Posterior cingulate gyrus (tissue), 11 donors: ENCODE measurements at regions of chr14 and their contacts with region 1.

Region 1: GRCh38 chr14:74478996-74479635 is 14.0 kb downstream of the NPC2 start:
- DNase-seq: no peak

Region 2: GRCh38 chr14:74362361-74362915 is 116.7 kb before region 1 on chr14:
- intact Hi-C with region 1: loop called (anchors 1 kb)
- DNase-seq: peak; percentile 48 to 96 (median 80)

Region 3: DNA sequence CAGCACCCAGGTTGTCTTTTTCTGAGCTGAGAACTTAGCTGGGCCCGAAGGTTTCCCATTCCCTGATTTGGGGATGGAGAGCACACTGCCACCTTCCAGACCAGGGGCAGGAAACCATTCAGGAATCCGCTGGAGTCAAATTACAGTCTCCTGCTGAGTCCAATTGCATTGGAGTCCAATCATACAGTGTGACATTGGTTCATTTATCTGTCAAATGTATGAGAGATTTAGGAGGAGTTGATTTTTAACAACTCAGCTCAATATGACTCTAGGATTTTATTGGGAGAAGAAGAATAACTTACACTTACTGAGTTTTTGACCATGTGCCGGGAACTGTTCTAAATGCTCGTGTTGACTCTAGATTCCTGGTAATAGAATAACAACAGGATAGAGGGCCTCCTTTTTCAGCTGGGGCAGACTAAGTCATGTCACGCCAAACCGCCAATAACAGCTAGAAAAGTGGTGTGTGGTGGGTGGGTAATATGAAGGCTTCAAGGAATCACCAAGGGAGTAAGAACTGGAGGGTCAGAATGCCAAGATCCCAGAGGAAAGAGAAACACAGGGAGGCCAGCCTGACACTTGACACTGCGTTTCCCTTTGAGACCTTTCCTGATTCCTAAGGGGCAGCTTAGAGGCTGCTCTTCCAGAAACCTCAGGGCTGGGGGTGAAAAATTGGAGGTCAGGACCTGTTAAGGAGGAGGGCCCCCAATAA is 64.6 kb before region 1 on chr14:
- intact Hi-C with region 1: no loop called
- DNase-seq: peak in 1 of 10 donors; percentile 32

Region 4: GRCh38 chr14:74549588-74549987 is 70.5 kb after region 1 on chr14:
- intact Hi-C with region 1: no loop called
- DNase-seq: peak in 1 of 10 donors; percentile 16

Region 5: DNA sequence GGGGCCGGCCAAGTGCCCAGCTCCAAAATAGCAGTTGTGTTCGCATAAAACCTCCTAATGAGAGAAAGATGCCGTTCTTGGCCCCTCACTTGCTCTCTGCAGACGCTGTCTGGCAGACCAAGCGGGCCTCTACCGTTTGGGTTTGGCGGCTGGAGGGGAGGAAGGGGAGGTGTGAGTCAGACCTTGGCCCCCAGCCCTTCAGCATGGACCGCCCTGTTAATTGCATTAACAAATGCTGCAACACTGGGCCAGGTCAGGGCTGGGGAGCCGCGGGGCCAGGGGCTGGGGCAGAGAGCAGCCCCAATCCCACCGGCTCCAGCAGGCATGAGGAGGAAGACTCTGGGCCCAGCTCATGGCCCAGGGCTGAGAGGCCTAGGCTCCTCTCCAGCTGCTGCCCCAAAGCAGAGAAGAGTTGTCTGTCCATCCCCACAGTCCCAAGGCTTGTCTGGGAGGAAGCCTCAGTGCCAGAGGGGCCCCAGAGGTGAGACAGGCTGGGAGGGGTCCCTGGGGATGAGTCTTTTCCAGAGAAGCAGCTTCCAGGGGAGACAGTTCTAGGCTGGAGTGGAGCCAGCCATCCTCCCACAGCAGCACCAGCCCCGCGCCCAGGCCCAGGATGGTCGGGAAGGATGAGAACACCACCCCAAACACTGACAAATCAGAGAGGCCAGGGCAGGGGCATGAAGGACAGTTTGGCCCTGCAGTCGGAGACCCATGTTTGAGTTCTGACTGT is 116.1 kb after region 1 on chr14:
- intact Hi-C with region 1: no loop called
- DNase-seq: peak in 4 of 10 donors; percentile 52 to 91 (median 77)